AG04449 (cell line): ENCODE measurements at regions of chr18 and their contacts with region 1.

Region 1: GRCh38 chr18:24600076-24600654 is 139.7 kb downstream of the HRH4 start:
- DNase-seq: no peak
- H3K4me3 ChIP-seq: no peak overlapping the region
- CTCF ChIP-seq: peak; percentile 51

Region 2: DNA sequence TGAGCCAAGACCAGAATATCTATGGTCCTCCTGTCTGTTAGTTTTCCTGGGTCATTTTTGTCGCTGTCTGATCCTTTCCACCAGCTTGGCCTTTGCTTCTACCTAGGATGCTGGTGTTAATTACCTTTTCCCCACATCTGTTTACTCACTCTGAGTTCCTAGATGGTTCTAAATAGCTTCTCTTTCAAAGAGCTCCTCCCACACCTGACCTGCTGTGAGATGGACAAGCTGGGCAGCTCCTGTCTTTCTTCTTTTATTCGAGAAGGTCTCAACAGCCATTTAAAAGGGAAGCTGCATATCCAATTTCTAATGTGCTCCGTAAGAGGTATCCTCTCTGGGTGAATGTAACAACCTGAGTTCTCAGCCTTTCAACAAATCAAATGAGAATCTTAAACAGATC is 16.5 kb after region 1 on chr18:
- CTCF ChIA-PET with region 1: no interaction called
- POLR2A ChIA-PET with region 1: no interaction called
- DNase-seq: no peak
- H3K4me3 ChIP-seq: no peak overlapping the region
- CTCF ChIP-seq: no peak

Region 3: DNA sequence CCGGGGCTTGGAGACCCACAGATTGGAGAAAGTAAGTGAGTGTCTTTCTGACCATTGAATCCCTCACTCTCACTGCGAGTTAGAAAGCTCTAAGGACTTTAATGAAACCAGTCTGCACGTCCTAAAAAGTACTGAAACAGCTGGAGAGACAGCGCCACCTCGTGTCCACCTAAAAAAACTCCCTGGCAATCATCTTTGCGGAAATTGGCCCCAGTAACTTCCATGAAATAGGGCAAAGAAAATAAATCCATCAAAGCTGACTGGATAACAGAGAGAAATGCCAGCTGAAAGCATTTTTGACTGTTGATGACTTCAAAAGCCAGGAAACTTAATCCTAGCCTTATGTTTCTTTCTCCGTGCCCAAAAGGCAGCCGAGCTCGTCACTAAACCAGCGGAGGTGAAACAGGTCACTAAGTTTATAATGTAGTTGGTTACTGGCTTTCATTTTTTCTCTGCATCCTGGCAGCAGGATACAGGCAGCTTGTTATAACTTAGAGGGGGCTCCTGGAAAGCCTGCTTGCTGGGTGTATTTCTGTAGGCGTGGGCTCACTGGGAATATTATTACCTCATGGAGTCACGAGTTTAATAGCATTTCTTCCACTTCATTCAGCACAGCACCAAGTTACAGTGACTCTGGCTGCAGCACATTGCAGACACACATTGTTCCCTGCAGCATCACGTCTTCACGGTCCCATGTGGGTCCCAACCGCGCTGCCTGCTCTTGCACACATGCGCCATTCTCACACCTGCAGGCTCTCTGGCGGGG is 126.7 kb after region 1 on chr18:
- CTCF ChIA-PET with region 1: interaction called, 30 read pairs
- POLR2A ChIA-PET with region 1: no interaction called
- DNase-seq: peak; percentile 46
- H3K4me3 ChIP-seq: peak overlapping the region; percentile 42
- CTCF ChIP-seq: peak; percentile 77

Region 4: GRCh38 chr18:24913507-24914170 is 313.5 kb after region 1 on chr18:
- CTCF ChIA-PET with region 1: no interaction called
- POLR2A ChIA-PET with region 1: no interaction called
- DNase-seq: no peak
- H3K4me3 ChIP-seq: no peak overlapping the region
- CTCF ChIP-seq: no peak